Pancreas (tissue), 10 donors: ENCODE measurements at regions of chr15 and their contacts with region 1.

Region 1: GRCh38 chr15:45611305-45611704 is 23.5 kb upstream of the SQOR start:
- DNase-seq: no peak
- ATAC-seq: no peak
- H3K4me3 ChIP-seq: no peak overlapping the region
- H3K27ac ChIP-seq: no peak overlapping the region
- H3K4me1 ChIP-seq: no peaks in the 10 kb centered on the region
- H3K27me3 ChIP-seq: no peaks in the 10 kb centered on the region
- CTCF ChIP-seq: peak in 2 of 4 donors; percentile 13 to 20

Region 2: DNA sequence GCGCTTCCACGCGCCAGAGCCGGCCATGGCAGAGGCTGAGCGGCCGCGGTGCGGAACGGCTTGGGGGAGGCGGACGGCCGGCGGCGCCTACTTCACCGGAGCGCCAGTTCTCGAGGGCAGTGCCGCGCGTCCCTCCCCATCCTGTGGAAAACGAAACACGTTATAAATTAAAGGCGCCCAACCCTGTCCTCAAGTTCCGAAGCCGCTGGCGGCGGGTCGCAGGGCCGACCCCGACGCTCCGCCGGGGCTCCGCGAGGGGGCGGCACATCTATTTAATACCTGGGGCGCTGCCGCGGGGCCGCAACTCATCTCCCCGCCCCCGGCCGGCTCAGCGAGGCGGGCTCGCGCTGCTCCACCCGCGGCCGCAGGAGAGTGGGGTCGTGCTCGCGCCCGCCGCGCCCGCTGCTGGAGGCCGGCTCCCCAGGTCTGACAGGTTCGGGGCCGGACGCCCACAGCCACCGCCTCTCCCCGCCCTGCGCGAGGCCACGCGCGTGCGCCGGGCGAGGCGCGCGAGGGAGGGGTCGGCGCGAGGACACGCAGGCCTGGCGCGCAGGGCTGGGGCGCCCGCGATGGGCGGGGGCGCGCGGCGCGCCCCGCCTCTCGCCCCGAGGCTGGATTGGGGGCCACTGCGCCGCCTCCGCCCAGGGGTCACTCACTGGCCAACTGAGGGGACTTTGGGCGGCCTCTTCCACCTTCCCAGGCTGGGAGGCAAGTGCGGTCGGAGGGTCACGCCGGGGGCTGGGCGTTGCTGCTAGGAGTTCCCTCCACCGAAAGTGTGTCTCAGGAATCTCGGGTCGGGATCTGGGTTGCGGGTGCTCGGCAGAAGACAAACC is 88.8 kb before region 1 on chr15 and contains the start of gene SLC30A4:
- intact Hi-C with region 1: loop called in 1 of 3 experiments (anchors 10 kb)
- DNase-seq: peak; percentile 56 to 88 (median 70)
- ATAC-seq: peak; percentile 87 to 96 (median 91)
- H3K4me3 ChIP-seq: peak within 1 kb of the TSS; percentile 72 to 87 (median 78)
- H3K27ac ChIP-seq: peak within 1 kb of the TSS; percentile 46 to 77 (median 64)
- H3K4me1 ChIP-seq: peaks cover 0 to 10% (median 8%) of the 10 kb centered on the region in 3 donors
- H3K27me3 ChIP-seq: no peaks in the 10 kb centered on the region
- CTCF ChIP-seq: peak in 2 of 4 donors; percentile 11 to 15
- total RNA-seq, gene SLC30A4: 1.0 to 2.2 (median 1.4) TPM